GM12878 (cell line): ENCODE measurements at regions of chr7 and their contacts with region 1.

Region 1: GRCh38 chr7:83655951-83656556 is 7.1 kb upstream of the SEMA3E start:
- DNase-seq: peak; percentile 7
- ATAC-seq: peak; percentile 80
- H3K4me3 ChIP-seq: no peak overlapping the region
- H3K27ac ChIP-seq: no peak overlapping the region
- H3K4me1 ChIP-seq: no peaks in the 10 kb centered on the region
- H3K27me3 ChIP-seq: no peaks in the 10 kb centered on the region; a peak in 1 of 4 replicates
- CTCF ChIP-seq: peak; percentile 80 to 89 (median 82); a peak in 5 of 6 replicates
- EP300 ChIP-seq: no peak
- POLR2A ChIP-seq: no peak
- RAD21 ChIP-seq: peak; percentile 96

Region 2: GRCh38 chr7:81676105-81676811 is 1979.8 kb before region 1 on chr7:
- CTCF ChIA-PET with region 1: no interaction called
- POLR2A ChIA-PET with region 1: no interaction called
- RAD21 ChIA-PET with region 1: no interaction called
- SMC1A ChIA-PET with region 1: no interaction called
- in situ Hi-C with region 1: no loop called
- intact Hi-C with region 1: no loop called
- DNase-seq: no peak
- ATAC-seq: peak; percentile 47
- H3K4me3 ChIP-seq: no peak overlapping the region
- H3K27ac ChIP-seq: no peak overlapping the region
- H3K4me1 ChIP-seq: peaks cover 5% of the 10 kb centered on the region; the same call in 1 of the 2 replicates
- H3K27me3 ChIP-seq: no peaks in the 10 kb centered on the region
- CTCF ChIP-seq: no peak
- EP300 ChIP-seq: no peak
- POLR2A ChIP-seq: no peak
- RAD21 ChIP-seq: no peak

Region 3: DNA sequence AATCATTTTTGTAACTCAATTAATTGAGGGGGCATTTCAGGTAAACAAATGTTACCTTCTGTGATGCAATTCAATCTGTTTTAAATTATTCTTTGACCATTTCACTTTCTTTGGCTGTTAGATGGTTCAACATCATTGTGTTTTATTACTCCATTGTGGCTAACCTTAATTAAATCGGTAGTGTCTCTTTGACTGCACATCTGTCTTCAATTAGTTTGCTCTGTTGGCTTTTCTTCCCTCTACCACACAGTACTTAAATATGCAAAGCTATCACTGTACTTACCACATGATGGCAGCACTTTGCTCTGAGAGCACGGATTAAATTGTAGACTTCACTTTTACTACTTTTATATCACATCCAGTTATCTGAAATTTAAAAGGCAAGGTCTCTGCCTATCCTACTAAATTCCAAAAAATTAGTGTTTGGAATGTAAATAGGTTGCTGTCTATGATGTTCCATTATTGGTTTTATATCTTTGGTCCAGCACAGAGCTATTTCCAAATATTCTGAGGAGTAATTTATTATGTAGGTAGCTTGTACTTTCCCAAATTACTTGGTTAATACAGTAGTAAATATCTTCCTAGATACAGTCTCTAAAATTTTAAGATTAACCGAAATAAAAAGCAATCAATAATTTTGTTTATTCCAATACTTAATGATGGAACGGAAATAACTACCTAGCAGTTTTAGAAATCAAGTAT is 845.3 kb before region 1 on chr7:
- CTCF ChIA-PET with region 1: interaction called, 4 read pairs
- POLR2A ChIA-PET with region 1: no interaction called
- RAD21 ChIA-PET with region 1: no interaction called
- SMC1A ChIA-PET with region 1: no interaction called
- in situ Hi-C with region 1: no loop called
- intact Hi-C with region 1: loop called (anchors 10 kb)
- DNase-seq: no peak
- ATAC-seq: peak; percentile 94
- H3K4me3 ChIP-seq: no peak overlapping the region
- H3K27ac ChIP-seq: no peak overlapping the region
- H3K4me1 ChIP-seq: no peaks in the 10 kb centered on the region
- H3K27me3 ChIP-seq: no peaks in the 10 kb centered on the region
- CTCF ChIP-seq: peak; percentile 51 to 60 (median 56); a peak in 5 of 6 replicates
- EP300 ChIP-seq: no peak
- POLR2A ChIP-seq: no peak
- RAD21 ChIP-seq: peak; percentile 59

Region 4: DNA sequence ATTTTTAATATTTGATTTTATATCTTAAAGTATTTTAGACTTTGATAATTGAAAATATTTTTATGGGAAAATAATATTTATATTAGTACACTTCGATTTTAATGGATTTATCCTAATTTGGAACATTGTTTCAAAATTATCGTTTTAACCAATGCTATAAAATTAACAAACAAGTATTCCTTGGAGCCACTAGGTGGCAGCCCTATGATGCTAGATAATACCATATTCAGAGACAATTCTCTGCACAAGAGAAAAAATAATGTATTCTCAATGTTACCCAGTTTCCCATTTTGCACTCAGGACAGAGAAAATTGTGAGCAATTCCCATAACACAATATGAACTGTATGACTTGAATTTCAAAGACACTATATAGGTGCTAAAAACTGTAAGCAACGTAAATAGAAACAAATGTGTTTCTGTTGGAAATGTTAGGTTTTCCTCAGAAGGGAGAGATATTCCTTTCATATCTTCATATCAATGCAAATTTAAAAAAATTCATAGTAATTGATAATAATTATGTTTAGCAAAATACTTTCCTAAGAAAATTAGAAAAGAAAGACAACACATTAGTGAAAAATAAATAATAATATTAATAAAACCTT is 245.0 kb before region 1 on chr7:
- CTCF ChIA-PET with region 1: interaction called, 14 read pairs
- POLR2A ChIA-PET with region 1: interaction called, 3 read pairs
- RAD21 ChIA-PET with region 1: interaction called, 5 read pairs
- SMC1A ChIA-PET with region 1: interaction called, 3 read pairs
- in situ Hi-C with region 1: loop called (anchors 10 kb)
- intact Hi-C with region 1: loop called (anchors 1 kb)
- DNase-seq: no peak
- ATAC-seq: peak; percentile 52; the same call in 1 of the 3 replicates
- H3K4me3 ChIP-seq: no peak overlapping the region
- H3K27ac ChIP-seq: no peak overlapping the region
- H3K4me1 ChIP-seq: no peaks in the 10 kb centered on the region
- H3K27me3 ChIP-seq: no peaks in the 10 kb centered on the region
- CTCF ChIP-seq: peak; percentile 47 to 63 (median 51); a peak in 5 of 6 replicates
- EP300 ChIP-seq: no peak
- POLR2A ChIP-seq: no peak
- RAD21 ChIP-seq: peak; percentile 89